Panc1 (cell line): ENCODE measurements at regions of chr6 and their contacts with region 1.

Region 1: DNA sequence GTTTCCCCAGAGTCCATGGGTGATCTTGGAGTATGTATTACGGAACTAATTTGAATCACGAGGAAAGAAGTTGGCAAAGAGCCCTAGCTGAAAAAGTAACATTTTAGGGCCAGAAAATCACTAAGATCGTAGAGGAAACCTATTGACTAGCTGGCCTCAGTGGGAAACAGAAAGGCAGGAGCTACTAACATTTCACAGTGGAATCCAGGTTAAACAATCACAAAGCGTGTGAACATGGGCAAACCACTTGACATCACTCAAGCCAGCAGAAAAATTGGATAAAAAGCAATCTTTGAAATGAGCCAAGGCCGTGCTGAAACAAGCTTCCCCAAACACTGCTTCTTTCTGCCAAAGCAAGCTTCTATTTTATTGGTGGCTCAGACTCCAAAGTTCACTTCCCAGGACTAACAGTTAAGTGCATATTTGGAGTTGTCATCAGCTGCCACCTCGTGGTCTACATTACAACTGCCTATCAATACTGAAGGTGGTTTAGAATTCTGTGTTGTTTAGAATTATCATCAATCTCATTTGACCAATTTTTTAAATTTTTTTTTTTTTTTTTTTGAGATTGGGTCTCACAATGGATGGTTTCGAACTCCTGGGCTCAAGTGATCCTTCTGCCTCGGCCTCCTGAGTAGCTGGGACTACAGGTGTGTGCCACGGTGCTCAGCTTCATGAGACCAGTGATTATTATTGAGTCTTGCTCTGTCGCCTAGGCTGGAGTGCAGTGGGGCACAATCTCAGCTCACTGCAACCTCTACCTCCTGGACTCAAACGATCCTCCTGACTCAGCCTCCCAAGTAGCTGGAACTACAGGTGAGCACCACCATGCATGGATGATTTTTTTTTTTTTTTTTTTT is 10.6 kb downstream of the RPS10 start:
- DNase-seq: no peak
- ATAC-seq: peak; percentile 73
- H3K4me3 ChIP-seq: no peak overlapping the region
- H3K27ac ChIP-seq: no peak overlapping the region
- H3K4me1 ChIP-seq: peaks cover 6% of the 10 kb centered on the region
- H3K27me3 ChIP-seq: no peaks in the 10 kb centered on the region
- CTCF ChIP-seq: peak; percentile 77

Region 2: DNA sequence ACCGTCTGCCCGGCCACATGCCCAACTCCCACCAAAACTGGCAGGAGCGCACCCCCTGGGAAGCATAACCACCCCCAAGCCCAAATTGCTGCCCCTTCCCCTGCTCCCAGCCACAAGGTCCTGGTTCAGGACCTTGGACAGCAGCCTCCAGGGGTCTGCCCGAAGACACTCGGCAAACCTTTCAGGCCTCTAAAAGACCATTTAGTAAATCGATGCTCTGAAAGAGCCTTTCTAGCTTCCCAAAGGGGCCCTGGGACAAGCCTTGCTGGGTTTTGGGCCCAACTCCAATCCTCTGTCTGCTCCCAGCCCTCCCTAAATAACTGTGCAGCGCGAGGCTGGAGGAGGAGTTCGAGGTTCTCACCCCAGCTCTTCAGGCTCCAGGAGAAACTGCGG is 299.8 kb before region 1 on chr6:
- CTCF ChIA-PET with region 1: interaction called, 10 read pairs
- POLR2A ChIA-PET with region 1: no interaction called
- in situ Hi-C with region 1: no loop called
- intact Hi-C with region 1: no loop called
- DNase-seq: no peak
- ATAC-seq: no peak
- H3K4me3 ChIP-seq: no peak overlapping the region
- H3K27ac ChIP-seq: no peak overlapping the region
- H3K4me1 ChIP-seq: no peaks in the 10 kb centered on the region
- H3K27me3 ChIP-seq: peaks cover 3% of the 10 kb centered on the region
- CTCF ChIP-seq: no peak

Region 3: DNA sequence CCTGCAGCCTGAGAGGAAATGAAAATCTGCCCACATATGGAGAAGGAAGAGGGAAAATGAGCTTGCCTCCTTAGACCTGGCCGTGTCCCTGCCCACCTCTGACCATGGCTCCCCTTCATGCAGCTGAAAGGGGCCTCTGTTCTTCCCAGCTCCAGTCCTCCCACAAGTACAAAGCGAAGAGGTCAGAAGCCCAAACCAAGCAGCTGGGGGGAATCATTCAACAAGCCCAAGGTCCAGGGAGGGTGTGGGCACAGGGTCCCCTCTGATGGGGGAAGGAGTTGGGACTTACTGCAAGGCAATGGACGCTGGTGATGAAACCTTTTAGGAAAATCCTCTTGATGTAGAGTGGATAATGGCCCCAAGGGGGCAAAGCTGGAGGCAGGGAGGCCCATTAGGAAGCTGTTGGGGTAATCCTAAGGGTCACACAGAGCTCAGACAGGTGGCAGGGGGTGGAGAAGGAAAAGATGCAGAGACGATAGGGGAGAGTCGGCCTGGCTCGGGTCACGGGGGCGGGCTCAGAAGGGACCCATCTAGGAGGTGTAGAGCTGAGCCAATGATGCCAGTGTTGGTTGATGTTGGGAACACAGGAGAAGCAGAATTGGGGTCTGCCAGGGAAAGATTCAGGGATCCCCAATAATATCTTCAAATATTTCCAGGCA is 253.2 kb before region 1 on chr6:
- CTCF ChIA-PET with region 1: interaction called, 19 read pairs
- POLR2A ChIA-PET with region 1: no interaction called
- in situ Hi-C with region 1: no loop called
- intact Hi-C with region 1: loop called (anchors 5 kb)
- DNase-seq: no peak
- ATAC-seq: no peak
- H3K4me3 ChIP-seq: no peak overlapping the region
- H3K27ac ChIP-seq: no peak overlapping the region
- H3K4me1 ChIP-seq: no peaks in the 10 kb centered on the region
- H3K27me3 ChIP-seq: no peaks in the 10 kb centered on the region
- CTCF ChIP-seq: no peak

Region 4: DNA sequence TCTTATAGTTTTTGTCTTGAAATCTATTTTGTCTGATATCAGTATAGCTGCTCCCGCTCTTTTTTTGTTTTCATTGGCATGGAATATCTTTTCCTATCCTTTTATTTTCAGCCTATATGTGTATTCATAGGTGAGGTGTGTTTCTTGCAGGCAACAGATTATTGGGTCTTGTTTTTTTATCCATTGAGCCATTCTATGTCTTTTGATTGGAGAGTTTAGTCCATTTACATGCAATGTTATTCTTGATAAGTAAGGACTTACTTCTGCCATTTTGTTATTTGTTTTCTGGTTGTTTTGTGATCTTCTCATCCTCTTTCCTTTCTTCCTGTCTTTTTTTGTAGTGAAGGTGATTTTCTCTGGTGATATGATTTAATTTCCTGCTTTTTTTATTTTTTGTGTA is 245.3 kb before region 1 on chr6:
- CTCF ChIA-PET with region 1: no interaction called
- POLR2A ChIA-PET with region 1: no interaction called
- in situ Hi-C with region 1: no loop called
- intact Hi-C with region 1: loop called (anchors 5 kb)
- DNase-seq: no peak
- ATAC-seq: no peak
- H3K4me3 ChIP-seq: no peak overlapping the region
- H3K27ac ChIP-seq: no peak overlapping the region
- H3K4me1 ChIP-seq: no peaks in the 10 kb centered on the region
- H3K27me3 ChIP-seq: no peaks in the 10 kb centered on the region
- CTCF ChIP-seq: no peak

Region 5: DNA sequence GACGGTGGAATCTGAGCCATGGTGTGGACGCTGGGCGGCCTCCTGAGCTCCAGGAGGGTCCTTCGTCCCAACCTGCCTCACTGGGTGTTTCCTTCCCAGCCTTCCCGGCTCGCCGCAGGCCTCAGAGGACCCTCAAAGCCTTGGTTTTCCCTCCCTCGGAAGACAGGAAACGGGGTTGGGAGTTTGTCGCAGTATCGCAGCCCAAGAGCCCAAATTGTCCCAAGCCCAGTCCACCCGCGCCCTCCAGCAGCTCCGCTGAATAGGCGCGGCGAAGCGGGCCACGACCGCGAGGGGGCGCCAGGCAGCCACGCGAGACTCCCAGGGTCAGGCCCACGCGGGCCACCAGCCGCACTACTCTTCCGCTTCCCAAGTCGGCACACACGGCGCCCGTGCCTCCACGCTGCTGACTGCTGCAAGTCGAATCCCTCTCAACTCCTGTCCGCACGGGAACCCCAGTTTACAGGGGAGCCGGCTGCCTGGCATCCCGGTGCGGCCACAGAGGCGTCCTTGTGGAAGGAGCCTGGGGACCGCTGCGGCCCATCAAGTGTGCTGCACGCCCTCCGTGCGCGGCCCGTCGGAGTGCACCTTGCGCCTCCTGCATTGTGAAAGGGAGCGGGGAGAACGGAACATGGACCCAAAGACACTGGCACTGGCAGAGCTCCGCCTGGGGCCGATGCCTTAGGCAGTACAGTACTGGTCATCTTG is 219.0 kb before region 1 on chr6:
- CTCF ChIA-PET with region 1: interaction called, 15 read pairs
- POLR2A ChIA-PET with region 1: no interaction called
- in situ Hi-C with region 1: no loop called
- intact Hi-C with region 1: no loop called
- DNase-seq: peak; percentile 18
- ATAC-seq: peak; percentile 97
- H3K4me3 ChIP-seq: peak overlapping the region; percentile 31 to 56
- H3K27ac ChIP-seq: peak overlapping the region; percentile 52
- H3K4me1 ChIP-seq: no peaks in the 10 kb centered on the region
- H3K27me3 ChIP-seq: no peaks in the 10 kb centered on the region
- CTCF ChIP-seq: peak; percentile 99

Region 6: DNA sequence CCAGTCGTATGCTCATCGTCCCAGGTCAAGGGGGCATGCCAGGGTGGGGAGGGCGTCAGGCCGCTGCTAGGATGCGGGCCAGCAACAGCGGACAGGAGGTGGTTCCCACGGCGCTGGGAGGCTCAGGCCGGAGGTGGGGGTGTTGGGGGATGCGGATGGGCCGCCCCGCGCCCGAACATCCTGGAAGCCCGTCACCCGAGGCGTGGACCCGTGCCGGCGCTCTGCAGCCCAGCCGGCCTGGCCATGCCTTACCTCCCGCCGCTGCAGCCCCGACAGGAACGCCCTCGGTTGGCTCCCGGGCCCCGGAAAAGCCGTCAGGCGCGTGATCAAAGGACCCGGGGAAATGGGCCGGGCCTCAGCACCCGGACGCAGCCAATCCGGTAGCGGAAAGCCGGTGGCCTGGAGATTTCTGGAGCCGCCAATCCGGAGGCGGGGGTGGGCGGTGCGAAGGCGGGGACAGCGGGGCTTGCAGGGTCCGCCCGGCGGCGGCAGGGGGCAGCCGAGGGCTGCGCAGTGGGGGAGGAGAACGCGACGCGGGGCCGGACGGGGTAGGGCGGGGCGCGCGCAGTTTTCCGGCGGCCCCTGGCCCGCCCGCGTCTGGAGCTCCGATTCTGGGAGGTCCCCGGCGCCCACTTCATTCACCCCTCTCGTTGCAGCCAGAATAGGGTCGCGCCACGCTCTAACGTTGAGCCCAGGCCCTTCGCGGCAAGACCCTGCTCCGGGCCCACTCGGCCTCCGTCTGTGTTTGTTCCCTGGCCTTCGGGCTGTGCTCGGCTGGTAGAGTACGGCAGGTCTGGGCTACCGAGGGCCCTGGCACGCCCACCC is 166.3 kb before region 1 on chr6 and contains the start of gene SMIM29:
- CTCF ChIA-PET with region 1: interaction called, 20 read pairs
- POLR2A ChIA-PET with region 1: no interaction called
- in situ Hi-C with region 1: no loop called
- intact Hi-C with region 1: loop called (anchors 5 kb)
- DNase-seq: no peak
- ATAC-seq: peak; percentile 73
- H3K4me3 ChIP-seq: peak within 1 kb of the TSS; percentile 51 to 91
- H3K27ac ChIP-seq: peak within 1 kb of the TSS; percentile 89
- H3K4me1 ChIP-seq: peaks cover 47% of the 10 kb centered on the region
- H3K27me3 ChIP-seq: no peaks in the 10 kb centered on the region
- CTCF ChIP-seq: peak; percentile 98
- total RNA-seq, gene SMIM29: 35.6 TPM

Region 7: GRCh38 chr6:34526992-34527728 is 111.9 kb after region 1 on chr6:
- CTCF ChIA-PET with region 1: no interaction called
- POLR2A ChIA-PET with region 1: no interaction called
- in situ Hi-C with region 1: no loop called
- intact Hi-C with region 1: no loop called
- DNase-seq: peak; percentile 53
- ATAC-seq: peak; percentile 95
- H3K4me3 ChIP-seq: peak overlapping the region; percentile 27 to 39
- H3K27ac ChIP-seq: peak overlapping the region; percentile 72
- H3K4me1 ChIP-seq: peaks cover 15% of the 10 kb centered on the region
- H3K27me3 ChIP-seq: no peaks in the 10 kb centered on the region
- CTCF ChIP-seq: peak; percentile 85; the same call in 1 of the 2 replicates

Region 8: DNA sequence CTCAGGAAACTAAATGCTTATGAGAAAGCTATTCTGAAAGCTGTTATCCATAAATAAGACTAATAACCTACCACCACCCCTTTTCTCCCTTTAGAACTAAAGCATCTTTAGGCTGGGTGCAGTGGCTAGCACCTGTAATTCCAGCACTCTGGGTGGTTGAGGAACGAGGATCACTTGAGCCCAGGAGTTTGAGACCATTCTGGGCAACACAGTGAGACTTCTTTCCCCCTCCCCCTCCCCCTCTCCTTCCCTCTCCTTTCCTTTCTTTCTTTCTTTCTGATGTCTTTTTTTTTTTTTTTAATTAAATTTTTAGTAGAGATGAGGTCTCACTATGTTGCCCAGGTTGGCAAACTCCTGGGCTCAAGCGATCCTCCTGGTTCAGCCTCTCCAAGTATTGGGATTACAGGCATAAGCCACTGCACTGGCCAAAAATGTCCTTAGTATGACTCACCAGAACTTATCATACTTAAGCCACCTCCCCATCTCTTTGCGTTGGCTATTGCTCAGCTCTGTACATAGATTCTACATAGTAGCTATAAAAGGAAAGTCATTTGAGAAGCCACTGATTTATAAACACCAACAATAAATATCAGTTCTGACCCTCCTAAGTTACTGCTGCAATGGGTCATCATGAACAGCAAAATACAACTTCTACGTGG is 195.7 kb after region 1 on chr6:
- CTCF ChIA-PET with region 1: interaction called, 12 read pairs
- POLR2A ChIA-PET with region 1: no interaction called
- in situ Hi-C with region 1: no loop called
- intact Hi-C with region 1: no loop called
- DNase-seq: peak; percentile 51
- ATAC-seq: peak; percentile 64; the same call in 1 of the 2 replicates
- H3K4me3 ChIP-seq: no peak overlapping the region
- H3K27ac ChIP-seq: peak overlapping the region; percentile 30
- H3K4me1 ChIP-seq: peaks cover 22% of the 10 kb centered on the region
- H3K27me3 ChIP-seq: no peaks in the 10 kb centered on the region
- CTCF ChIP-seq: no peak

Region 9: GRCh38 chr6:34664256-34664971 is 249.2 kb after region 1 on chr6:
- CTCF ChIA-PET with region 1: no interaction called
- POLR2A ChIA-PET with region 1: no interaction called
- in situ Hi-C with region 1: no loop called
- intact Hi-C with region 1: no loop called
- DNase-seq: no peak
- ATAC-seq: no peak
- H3K4me3 ChIP-seq: no peak overlapping the region
- H3K27ac ChIP-seq: peak overlapping the region; percentile 23
- H3K4me1 ChIP-seq: peaks cover 5% of the 10 kb centered on the region; the same call in 1 of the 2 replicates
- H3K27me3 ChIP-seq: no peaks in the 10 kb centered on the region
- CTCF ChIP-seq: no peak